CD4-positive, alpha-beta memory T cell (primary cell): ENCODE measurements at regions of chr16 and their contacts with region 1.

Region 1: DNA sequence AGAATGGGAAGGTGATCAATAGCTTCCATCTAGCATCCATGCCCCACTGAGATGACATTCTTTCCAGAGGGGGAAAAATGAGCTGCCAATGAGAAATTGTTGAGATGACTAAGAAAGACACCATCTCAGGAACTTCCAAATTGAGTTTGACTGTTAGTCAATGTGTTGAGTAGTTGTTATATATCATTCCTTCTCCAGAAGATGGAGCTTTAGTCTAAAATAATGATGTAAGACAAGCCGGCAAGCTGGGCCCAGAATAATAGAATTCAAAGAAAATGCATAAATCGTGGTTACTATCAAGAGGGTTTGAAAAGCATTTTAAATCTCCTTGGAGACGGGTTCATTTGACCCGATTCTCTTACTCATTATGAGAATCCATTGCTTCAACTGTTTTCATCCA is 71.0 kb upstream of the ATF7IP2 start:
- DNase-seq: peak in 4 of 5 donors; percentile 37 to 57 (median 46)
- H3K4me3 ChIP-seq: no peak overlapping the region
- H3K4me3 Mint-ChIP-seq: no peak overlapping the region
- H3K27ac ChIP-seq: no peak overlapping the region
- H3K27ac Mint-ChIP-seq: peak overlapping the region in 1 of 7 donors; percentile 65
- H3K4me1 ChIP-seq: peaks cover 8% of the 10 kb centered on the region
- H3K4me1 Mint-ChIP-seq: peaks cover 14 to 29% (median 20%) of the 10 kb centered on the region in 4 donors
- H3K27me3 ChIP-seq: no peaks in the 10 kb centered on the region
- H3K27me3 Mint-ChIP-seq: no peaks in the 10 kb centered on the region

Region 2: DNA sequence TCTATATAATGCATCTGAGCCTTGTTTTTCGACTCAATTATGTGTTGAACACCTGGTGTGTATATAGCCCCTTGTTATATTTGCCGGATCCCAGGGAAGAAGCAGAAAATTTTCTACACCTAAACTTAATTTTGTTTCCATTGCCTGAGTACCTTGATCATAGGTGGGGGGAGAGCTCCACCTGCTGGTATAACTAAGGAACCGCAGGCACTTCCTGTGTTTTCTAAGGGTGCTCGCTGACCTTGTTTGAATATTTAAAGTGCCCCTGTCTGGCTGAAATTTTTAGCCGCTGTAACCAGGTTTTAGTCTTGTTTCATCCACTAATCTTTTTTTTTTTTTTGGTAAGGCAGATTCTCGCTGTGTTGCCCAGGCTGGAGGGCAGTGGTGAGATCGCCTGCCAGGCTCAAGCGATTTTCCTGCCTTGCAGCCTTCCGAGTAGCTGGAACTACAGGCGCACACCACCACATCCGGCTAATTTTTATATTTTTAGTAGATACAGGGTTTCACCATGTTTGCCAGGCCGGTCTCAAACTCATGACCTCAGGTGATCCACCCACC is 422.3 kb after region 1 on chr16:
- CTCF ChIA-PET with region 1: interaction called, 13 read pairs
- POLR2A ChIA-PET with region 1: no interaction called
- intact Hi-C with region 1: loop called (anchors 1 kb)
- DNase-seq: peak; percentile 76 to 78 (median 78)
- H3K4me3 ChIP-seq: peak overlapping the region in 1 of 2 donors; percentile 20
- H3K4me3 Mint-ChIP-seq: peak overlapping the region; percentile 64 to 82 (median 74)
- H3K27ac ChIP-seq: peak overlapping the region; percentile 19
- H3K27ac Mint-ChIP-seq: peak overlapping the region; percentile 36 to 91 (median 86)
- H3K4me1 ChIP-seq: peaks cover 14% of the 10 kb centered on the region
- H3K4me1 Mint-ChIP-seq: peaks cover 3 to 12% (median 9%) of the 10 kb centered on the region in 4 donors
- H3K27me3 ChIP-seq: no peaks in the 10 kb centered on the region
- H3K27me3 Mint-ChIP-seq: no peaks in the 10 kb centered on the region